PC-3 (cell line): ENCODE measurements at regions of chr2 and their contacts with region 1.

Region 1: GRCh38 chr2:95022309-95023221 is 2.9 kb upstream of the MAL start:
- DNase-seq: peak; percentile 89
- ATAC-seq: peak; percentile 85
- H3K4me3 ChIP-seq: peak overlapping the region; percentile 53
- H3K27ac ChIP-seq: no peak overlapping the region
- H3K4me1 ChIP-seq: peaks cover 6% of the 10 kb centered on the region; the same call in 1 of the 2 replicates
- H3K27me3 ChIP-seq: no peaks in the 10 kb centered on the region
- CTCF ChIP-seq: peak; percentile 96

Region 2: DNA sequence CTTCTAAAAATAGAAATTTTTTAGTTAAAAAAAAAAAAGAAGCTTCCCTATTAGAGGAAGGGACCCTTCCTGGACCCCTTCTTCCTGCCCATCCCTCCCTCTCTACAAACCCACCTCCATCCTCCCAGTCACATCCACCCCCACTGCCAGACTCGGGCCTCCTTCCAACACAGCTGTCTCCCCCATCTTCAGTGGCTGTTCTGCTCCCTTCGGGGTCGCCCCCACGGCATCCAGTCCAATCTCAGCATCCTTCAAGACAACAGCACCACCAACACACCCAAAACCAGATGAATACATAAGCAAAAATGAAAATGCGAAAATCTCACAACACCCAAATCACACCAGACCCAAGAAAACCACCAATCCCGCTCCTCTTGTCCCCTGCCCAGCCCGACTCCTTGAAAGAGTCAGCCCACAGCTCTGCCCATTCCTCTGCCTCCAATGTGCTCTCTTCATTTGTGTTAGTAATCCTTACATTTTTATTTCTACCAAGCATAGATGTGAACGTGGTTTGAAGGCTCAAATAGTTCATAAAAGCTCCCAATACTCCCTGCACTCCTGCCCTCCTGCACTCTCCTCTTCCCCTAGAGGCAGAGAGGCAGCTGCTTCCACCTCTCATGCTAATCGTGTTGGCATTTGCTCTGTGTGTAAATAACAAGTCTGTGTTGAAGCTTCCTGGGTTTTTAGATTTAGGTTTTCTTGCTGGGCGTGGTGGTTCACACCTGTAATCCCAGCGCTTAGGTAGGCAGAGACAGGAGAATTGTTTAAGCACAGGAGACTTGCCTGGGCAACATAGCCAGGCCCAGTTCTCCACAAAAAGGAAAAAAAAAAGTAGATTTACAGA is 39.9 kb after region 1 on chr2:
- CTCF ChIA-PET with region 1: no interaction called
- POLR2A ChIA-PET with region 1: no interaction called
- intact Hi-C with region 1: loop called (anchors 5 kb)
- DNase-seq: peak; percentile 56
- ATAC-seq: peak; percentile 55
- H3K4me3 ChIP-seq: no peak overlapping the region
- H3K27ac ChIP-seq: no peak overlapping the region
- H3K4me1 ChIP-seq: peaks cover 49% of the 10 kb centered on the region
- H3K27me3 ChIP-seq: no peaks in the 10 kb centered on the region
- CTCF ChIP-seq: no peak

Region 3: DNA sequence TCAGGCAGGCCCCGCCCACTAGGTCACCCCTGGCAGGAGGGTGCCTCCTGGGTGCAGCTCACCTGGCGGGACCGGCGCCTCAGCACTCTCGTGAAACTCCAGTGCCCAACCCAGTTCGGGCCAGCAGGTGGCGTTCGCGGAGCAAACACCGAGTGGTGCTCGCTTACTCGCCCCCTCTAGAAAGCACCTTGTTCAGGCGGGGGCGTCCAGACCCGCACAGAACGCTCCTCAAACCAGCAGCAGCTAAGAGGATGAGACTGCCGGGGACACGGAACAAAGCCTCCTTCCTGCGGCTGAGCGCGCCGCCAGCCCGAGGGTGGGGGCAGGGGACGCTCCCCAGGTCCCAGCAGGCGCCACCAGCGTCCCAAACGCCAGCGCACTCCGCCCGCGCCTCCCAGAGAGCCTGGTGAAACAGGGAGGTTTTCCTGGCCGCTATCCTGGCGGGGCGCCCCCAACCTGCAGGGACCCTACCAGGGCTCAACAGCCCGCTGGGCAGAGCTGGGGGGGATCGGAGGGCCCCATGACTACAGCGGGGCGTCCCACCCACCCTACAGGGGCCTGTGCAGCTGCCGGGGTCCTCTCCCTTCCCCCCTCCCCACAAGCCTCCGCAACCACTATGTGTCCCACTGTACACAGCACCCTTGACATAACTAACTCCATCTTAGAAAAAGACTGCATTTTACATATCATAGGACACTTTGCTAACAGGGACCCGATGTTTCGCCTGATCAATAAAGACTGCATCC is 54.4 kb after region 1 on chr2:
- CTCF ChIA-PET with region 1: interaction called, 48 read pairs
- POLR2A ChIA-PET with region 1: no interaction called
- intact Hi-C with region 1: loop called (anchors 1 kb)
- DNase-seq: peak; percentile 93
- ATAC-seq: peak; percentile 92
- H3K4me3 ChIP-seq: peak overlapping the region; percentile 84
- H3K27ac ChIP-seq: no peak overlapping the region
- H3K4me1 ChIP-seq: peaks cover 10% of the 10 kb centered on the region; the same call in 1 of the 2 replicates
- H3K27me3 ChIP-seq: no peaks in the 10 kb centered on the region
- CTCF ChIP-seq: peak; percentile 89

Region 4: GRCh38 chr2:95115418-95115817 is 92.9 kb after region 1 on chr2:
- CTCF ChIA-PET with region 1: interaction called, 5 read pairs
- POLR2A ChIA-PET with region 1: no interaction called
- intact Hi-C with region 1: loop called (anchors 1 kb)
- DNase-seq: peak; percentile 72
- ATAC-seq: peak; percentile 99
- H3K4me3 ChIP-seq: no peak overlapping the region
- H3K27ac ChIP-seq: no peak overlapping the region
- H3K4me1 ChIP-seq: peaks cover 19% of the 10 kb centered on the region
- H3K27me3 ChIP-seq: no peaks in the 10 kb centered on the region
- CTCF ChIP-seq: peak; percentile 85

Region 5: GRCh38 chr2:95149397-95149984 is 126.9 kb after region 1 on chr2:
- CTCF ChIA-PET with region 1: no interaction called
- POLR2A ChIA-PET with region 1: no interaction called
- intact Hi-C with region 1: no loop called
- DNase-seq: no peak
- ATAC-seq: no peak
- H3K4me3 ChIP-seq: no peak overlapping the region; the same call in 1 of the 2 replicates
- H3K27ac ChIP-seq: no peak overlapping the region
- H3K4me1 ChIP-seq: no peaks in the 10 kb centered on the region
- H3K27me3 ChIP-seq: no peaks in the 10 kb centered on the region
- CTCF ChIP-seq: no peak